ENCODE measurements at regions of chr5 and their contacts with region 1.

Region 1: GRCh38 chr5:180784497-180785097 is 18.0 kb downstream of the MGAT1 start:
- DNase-seq: peak; percentile 74 to 86
- ATAC-seq: peak; percentile 93

Region 2: GRCh38 chr5:180291943-180292831 is 492.4 kb before region 1 on chr5 and contains the start of gene MAPK9:
- intact Hi-C with region 1: no loop called
- DNase-seq: peak; percentile 80 to 90
- ATAC-seq: peak; percentile 80
- total RNA-seq, gene MAPK9: 40.9 to 49.8 TPM

Region 3: DNA sequence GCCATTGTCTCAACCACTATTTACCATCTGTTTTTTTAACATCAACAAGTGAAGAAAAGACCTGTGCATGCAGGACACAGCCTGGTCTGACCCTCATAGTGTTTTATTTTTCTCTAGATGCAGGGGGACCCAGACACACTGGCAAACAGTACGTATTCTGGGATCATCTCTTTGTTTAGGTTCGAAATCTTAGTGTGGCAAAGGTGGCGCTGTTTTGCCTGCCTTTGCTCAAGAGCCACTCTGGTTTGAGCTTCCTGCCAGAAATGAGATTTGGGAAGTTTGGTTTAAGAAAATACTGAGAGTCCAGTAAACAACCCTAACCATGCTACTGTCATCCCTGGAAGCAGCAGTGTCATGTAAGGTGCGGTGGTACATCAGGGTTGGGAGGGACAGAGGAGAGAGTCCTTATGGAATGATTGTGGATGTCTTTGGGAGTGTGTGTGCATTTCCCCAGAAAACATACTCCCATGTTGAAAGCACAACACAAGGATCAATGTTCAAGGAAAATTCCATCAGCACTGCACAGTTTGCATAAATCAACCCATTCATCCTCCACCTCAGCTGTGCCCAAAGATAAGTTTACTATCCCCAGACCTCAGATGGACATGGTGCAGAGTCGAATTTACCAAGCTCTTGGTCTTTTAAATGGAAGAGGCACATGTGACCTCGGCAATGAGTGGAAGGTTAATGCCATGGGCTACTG is 101.2 kb before region 1 on chr5:
- intact Hi-C with region 1: no loop called
- DNase-seq: no peak
- ATAC-seq: no peak

Region 4: DNA sequence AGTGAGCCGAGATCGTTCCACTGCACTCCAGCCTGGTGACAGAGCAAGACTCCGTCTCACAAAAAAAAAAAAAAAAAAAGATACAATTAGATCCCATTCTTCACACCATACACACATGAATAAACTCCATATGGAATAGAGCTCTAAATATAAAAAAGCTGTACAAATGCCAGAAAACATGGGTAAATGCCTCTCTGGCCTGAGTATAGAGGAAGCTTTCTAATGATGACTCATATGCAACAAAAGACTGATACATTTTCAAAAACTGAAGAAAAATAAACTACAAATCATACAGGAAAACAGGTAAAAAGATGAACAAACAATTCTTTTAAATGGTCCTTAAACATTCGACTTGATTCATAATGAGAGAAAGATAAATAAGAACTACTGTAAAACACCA is 67.9 kb after region 1 on chr5:
- intact Hi-C with region 1: loop called in 1 of 2 experiments (anchors 10 kb)
- DNase-seq: no peak
- ATAC-seq: no peak

Region 5: DNA sequence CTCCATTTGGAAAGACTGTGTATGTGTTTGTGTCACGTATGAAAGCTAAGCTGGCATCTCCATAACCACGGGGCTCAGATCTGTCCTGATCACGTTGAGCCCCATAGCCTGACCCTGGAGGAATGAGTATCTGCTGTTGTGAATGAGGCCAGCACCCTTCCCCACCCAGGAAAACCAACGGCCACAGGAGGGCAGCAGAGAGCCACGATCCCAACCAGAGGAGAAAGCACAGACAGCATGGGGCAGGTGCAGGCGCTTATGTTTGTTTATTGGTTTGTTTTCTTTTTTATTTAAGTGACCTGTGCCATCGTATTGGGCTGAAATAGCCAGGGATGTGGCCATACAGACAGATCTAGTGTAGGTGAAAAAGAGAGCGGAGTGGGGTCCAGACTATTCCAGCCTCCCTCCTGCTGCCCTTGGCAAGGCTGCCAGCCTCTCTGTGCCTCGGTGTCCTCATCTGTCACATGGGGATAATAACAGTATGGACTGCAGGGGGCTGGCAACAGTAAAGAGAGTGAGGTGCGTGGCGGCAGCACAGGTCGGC is 374.8 kb after region 1 on chr5:
- intact Hi-C with region 1: loop called in 1 of 2 experiments (anchors 10 kb)
- DNase-seq: peak; percentile 76 to 92
- ATAC-seq: peak; percentile 99